ENCODE measurements at regions of chr6 and their contacts with region 1.

Region 1: DNA sequence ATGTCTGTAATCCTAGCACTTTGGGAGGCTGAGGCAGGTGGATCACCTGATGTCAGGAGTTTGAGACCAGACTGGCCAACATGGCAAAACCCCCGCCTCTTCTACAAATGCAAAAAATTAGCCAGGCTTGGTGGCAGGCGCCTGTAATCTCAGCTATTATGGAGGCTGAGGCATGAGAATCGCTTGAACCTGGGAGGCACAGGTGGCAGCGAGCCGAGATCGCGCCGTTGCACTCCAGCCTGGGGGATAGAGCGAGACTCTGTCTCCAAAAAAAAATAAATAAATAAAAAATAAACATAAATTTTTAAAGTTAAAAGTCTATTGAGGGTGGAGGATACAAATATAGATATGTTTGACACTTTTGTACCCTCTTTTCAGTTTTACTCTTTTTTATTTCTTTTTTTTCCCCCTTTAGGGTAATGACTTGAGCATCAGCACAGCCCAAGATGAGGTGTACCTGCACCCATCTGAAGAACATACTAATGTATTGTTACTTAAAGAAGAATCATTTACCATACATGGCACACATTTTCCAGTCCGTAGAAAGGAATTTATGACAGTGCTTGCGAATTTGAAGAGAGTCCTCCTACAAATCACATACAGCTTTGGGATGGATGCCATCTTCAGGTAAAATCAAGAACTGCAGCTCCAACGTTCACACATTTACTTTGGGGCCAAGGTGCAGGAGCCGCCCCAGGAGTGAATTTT is 368.9 kb downstream of the LAMA2 start:
- DNase-seq: peak; percentile 71
- ATAC-seq: peak; percentile 82
- H3K4me3 Mint-ChIP-seq: no peak overlapping the region
- H3K27ac Mint-ChIP-seq: no peak overlapping the region
- H3K4me1 Mint-ChIP-seq: peaks cover 17% of the 10 kb centered on the region
- H3K27me3 Mint-ChIP-seq: peaks cover 7% of the 10 kb centered on the region

Region 2: DNA sequence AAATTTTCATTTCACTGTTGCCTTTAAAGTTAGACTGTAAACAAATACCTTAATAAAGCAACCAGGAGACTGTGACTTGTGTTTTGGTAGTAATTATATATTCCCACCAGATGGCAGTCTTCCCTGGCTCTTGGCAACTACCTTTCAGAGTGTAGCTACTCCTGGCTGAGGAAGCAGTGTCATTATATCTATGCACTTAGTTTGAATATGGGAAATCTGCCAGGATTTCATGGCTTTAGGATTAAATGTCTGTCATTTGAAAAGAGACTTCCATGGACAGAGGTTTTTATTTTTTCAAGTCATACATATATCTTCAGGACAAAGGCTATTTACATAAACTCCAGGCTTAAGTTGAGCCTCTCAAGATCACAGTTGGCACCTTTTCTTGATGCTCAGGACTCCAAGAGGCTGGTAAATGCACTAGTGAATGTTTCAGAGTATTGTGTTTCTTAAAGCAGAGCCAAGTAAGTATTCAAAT is 1514.8 kb before region 1 on chr6:
- CTCF ChIA-PET with region 1: no interaction called
- POLR2A ChIA-PET with region 1: no interaction called
- intact Hi-C with region 1: loop called in 1 of 2 experiments (anchors 5 kb)
- DNase-seq: peak; percentile 42
- ATAC-seq: peak; percentile 90
- H3K4me3 Mint-ChIP-seq: no peak overlapping the region
- H3K27ac Mint-ChIP-seq: peak overlapping the region; percentile 29
- H3K4me1 Mint-ChIP-seq: peaks cover 44% of the 10 kb centered on the region
- H3K27me3 Mint-ChIP-seq: no peaks in the 10 kb centered on the region

Region 3: DNA sequence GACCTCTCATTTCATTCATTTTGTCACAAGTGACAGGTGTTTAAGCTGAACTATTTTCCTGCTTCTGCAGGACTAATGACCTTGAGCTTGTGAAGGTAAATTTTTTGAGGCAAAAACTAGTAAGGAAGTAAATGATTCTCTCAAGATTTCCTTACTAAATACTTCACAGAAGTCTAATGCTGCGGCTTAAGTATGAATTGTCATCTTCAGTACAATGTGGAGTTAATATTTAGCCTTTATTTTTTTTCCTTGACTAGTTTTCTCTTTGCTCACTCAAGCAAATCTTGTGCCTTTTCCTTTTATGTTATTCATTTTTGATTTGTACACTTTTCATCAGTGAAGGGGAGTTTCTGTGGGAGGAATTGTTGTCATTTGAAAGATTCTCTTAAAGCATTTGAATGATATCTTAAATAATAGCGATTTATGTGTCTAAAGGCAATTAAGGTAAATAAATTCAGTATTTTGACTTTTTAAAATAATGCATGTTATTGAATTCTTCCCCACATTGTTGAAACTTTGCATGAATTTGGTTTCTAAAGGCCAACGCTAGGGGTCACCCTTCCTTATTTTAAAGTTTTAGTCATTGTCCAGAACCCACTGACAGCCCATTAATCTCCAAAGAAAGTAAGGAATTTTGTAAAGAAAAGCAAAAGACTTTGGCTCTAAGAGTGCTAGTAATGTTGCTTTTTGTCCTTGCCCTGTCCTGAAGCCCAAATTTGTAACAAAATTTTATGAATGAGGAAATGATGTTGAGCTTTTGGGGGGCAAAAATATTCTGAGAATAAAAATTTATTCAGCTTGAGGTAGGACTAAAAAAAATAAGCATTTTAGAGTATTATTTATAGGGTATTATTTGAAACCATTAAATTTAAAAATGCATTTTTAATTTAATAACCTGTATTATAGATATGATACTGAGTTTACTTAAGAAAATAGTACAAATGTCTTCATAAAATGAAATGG is 526.3 kb before region 1 on chr6:
- CTCF ChIA-PET with region 1: no interaction called
- POLR2A ChIA-PET with region 1: no interaction called
- intact Hi-C with region 1: loop called (anchors 1 to 5 kb)
- DNase-seq: peak; percentile 40
- ATAC-seq: no peak
- H3K4me3 Mint-ChIP-seq: no peak overlapping the region
- H3K27ac Mint-ChIP-seq: no peak overlapping the region
- H3K4me1 Mint-ChIP-seq: no peaks in the 10 kb centered on the region
- H3K27me3 Mint-ChIP-seq: peaks cover 30% of the 10 kb centered on the region

Region 4: DNA sequence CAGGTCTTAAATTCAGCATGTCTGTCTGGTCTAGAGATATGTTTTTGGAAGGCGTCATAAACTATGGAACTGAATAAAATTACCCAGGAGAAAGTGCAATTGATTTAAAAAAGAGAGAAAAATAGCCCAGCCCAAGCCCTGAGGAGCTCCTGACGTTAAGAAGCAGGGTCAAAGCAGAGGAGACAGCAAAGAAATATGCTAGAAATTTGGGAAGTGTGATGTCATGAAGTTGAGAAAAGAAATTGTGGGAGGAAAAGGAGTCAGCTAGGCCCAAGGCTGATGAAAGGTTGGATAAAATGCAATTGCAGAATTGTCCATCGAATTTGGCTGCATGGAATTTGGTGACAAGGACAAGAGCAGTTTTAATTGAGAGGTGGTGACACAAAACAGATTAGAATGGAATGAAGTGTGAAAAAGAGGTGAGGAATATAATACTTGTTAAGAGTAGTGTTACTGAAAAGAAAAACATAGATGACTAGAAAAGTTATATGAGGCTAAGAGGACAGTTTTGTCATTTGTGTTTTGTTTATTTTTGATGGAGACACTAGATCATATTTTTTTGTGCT is 12.7 kb after region 1 on chr6:
- CTCF ChIA-PET with region 1: interaction called, 13 read pairs
- POLR2A ChIA-PET with region 1: no interaction called
- intact Hi-C with region 1: no loop called
- DNase-seq: no peak
- ATAC-seq: no peak
- H3K4me3 Mint-ChIP-seq: no peak overlapping the region
- H3K27ac Mint-ChIP-seq: no peak overlapping the region
- H3K4me1 Mint-ChIP-seq: no peaks in the 10 kb centered on the region
- H3K27me3 Mint-ChIP-seq: no peaks in the 10 kb centered on the region

Region 5: DNA sequence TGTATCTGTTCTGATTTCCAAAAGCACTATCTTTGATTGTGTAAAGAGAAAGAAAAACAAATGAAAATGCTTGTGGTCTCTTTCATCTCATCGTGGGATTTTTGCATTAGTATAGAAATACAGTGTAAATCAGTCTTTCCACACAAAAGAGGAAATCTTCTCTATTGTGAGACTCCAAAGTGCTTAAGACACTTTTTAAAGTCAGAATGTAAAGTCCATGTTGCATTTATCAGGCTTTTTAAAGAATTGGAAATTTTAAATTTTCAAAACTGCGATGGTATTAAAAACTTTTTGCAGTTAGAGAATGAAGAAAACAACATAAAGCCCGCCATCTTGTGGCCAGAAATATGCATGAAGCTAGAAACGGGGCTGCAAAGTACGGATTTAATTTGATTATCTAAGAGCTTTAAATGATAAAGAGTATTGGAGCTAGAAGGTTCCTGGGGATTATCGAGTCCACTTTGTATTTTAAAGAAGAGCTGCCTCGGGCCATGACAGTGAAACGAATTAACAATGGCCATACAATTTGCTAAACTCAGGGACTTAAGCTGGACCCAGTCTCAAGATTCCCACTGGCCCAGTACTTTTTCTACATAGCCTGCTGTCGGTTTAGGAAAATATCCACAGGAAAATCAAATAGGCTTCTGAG is 118.6 kb after region 1 on chr6:
- CTCF ChIA-PET with region 1: interaction called, 4 read pairs
- POLR2A ChIA-PET with region 1: no interaction called
- intact Hi-C with region 1: loop called (anchors 1 to 10 kb)
- DNase-seq: peak; percentile 62
- ATAC-seq: peak; percentile 33
- H3K4me3 Mint-ChIP-seq: no peak overlapping the region
- H3K27ac Mint-ChIP-seq: peak overlapping the region; percentile 14
- H3K4me1 Mint-ChIP-seq: peaks cover 19% of the 10 kb centered on the region
- H3K27me3 Mint-ChIP-seq: no peaks in the 10 kb centered on the region